ENCODE measurements at regions of chr12 and their contacts with region 1.

Region 1: DNA sequence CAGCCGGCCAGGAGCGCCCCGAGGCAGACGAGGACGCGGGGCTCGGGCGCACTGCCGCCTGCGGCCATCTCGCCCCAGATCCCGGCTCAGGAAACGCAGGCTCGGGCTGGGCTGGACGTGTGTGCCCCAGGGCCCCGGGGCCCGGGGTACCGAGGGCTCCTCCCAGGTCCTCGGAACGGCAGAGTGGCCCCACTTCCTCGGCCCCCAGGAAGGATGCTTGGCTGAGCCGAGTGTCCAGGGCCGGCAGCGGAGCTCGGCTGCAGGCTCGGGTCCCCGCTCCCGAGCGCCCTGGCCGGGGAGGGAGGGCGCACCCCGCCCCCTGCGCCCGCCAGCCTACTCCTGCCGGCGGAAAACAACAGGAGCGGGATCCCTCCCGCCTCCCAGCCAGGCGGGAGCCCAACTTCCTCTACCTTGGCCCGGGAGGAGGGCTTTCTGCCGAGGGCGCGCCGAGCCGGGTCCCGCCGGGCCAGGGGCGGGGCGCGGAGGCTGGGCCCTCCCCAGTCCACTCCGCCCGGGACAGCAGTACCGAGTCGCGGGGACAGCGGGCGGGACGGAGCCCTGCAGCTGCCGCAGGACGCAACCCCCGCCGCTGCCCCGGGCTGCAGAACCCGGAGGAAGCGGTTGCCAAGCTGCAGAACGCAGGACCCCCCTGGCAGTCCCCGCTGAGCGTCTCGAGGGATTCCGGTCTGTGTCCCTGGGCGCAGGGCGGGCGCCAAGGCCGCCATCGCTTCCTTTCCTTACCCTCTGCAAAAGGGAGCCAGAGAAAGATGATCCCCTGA is at the start of gene VSIG10:
- DNase-seq: peak; percentile 81 to 88
- ATAC-seq: peak; percentile 93 to 95
- H3K4me3 ChIP-seq: peak within 1 kb of the TSS; percentile 69
- H3K27ac ChIP-seq: peak within 1 kb of the TSS; percentile 87 to 93
- H3K4me1 ChIP-seq: peaks cover 14% of the 10 kb centered on the region
- CTCF ChIP-seq: no peak
- EP300 ChIP-seq: no peak
- POLR2A ChIP-seq: peak; percentile 71
- RAD21 ChIP-seq: no peak; a peak in 1 of 5 replicates
- polyA plus RNA-seq, gene VSIG10: 20.2 and 23.8 TPM in 2 replicates

Region 2: GRCh38 chr12:118061011-118061875 is 42.5 kb before region 1 on chr12 and contains the start of gene WSB2:
- CTCF ChIA-PET with region 1: interaction called, 5 read pairs
- POLR2A ChIA-PET with region 1: interaction called, 13 read pairs
- DNase-seq: peak; percentile 49 to 56
- ATAC-seq: peak; percentile 41 to 48
- H3K4me3 ChIP-seq: peak within 1 kb of the TSS; percentile 87
- H3K27ac ChIP-seq: peak within 1 kb of the TSS; percentile 98 to 100
- H3K4me1 ChIP-seq: peaks cover 51% of the 10 kb centered on the region
- CTCF ChIP-seq: no peak
- EP300 ChIP-seq: no peak
- POLR2A ChIP-seq: peak; percentile 49
- RAD21 ChIP-seq: no peak
- polyA plus RNA-seq, gene WSB2: 93.5 and 121 TPM in 2 replicates

Region 3: GRCh38 chr12:118120579-118121363 is 17.0 kb after region 1 on chr12:
- CTCF ChIA-PET with region 1: interaction called, 23 read pairs
- POLR2A ChIA-PET with region 1: no interaction called
- DNase-seq: peak; percentile 69 to 94
- ATAC-seq: peak; percentile 89 to 92
- H3K4me3 ChIP-seq: no peak overlapping the region
- H3K27ac ChIP-seq: peak overlapping the region in 1 of 2 experiments; percentile 55; a peak in 2 of 6 replicates
- H3K4me1 ChIP-seq: peaks cover 13% of the 10 kb centered on the region
- CTCF ChIP-seq: peak; percentile 75
- EP300 ChIP-seq: no peak
- POLR2A ChIP-seq: no peak
- RAD21 ChIP-seq: peak; percentile 60 to 75

Region 4: DNA sequence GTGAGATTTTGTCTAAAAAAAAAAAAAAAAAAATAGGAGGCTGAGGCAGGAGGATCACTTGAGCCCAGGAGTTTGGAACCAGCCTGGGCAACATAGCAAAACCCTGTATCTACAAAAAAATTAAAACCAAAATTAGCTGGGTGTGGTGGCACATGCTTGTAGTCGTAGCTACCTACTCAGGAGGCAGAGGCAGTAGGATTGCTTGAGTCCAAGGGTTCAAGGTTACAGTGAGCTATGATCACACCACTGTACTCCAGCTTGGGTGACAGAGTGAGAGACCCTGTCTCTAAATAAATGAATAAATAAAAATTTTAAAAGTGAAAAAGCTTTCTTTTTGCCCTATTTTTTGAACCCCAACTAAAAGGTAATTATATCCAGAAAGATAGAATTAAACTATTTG is 145.8 kb after region 1 on chr12:
- CTCF ChIA-PET with region 1: no interaction called
- POLR2A ChIA-PET with region 1: no interaction called
- DNase-seq: no peak
- ATAC-seq: no peak
- H3K4me3 ChIP-seq: no peak overlapping the region
- H3K27ac ChIP-seq: no peak overlapping the region
- H3K4me1 ChIP-seq: no peaks in the 10 kb centered on the region
- CTCF ChIP-seq: no peak
- EP300 ChIP-seq: no peak
- POLR2A ChIP-seq: no peak
- RAD21 ChIP-seq: no peak

Measured in A549 (cell line).